ENCODE measurements at regions of chr4 and their contacts with region 1.

Region 1: DNA sequence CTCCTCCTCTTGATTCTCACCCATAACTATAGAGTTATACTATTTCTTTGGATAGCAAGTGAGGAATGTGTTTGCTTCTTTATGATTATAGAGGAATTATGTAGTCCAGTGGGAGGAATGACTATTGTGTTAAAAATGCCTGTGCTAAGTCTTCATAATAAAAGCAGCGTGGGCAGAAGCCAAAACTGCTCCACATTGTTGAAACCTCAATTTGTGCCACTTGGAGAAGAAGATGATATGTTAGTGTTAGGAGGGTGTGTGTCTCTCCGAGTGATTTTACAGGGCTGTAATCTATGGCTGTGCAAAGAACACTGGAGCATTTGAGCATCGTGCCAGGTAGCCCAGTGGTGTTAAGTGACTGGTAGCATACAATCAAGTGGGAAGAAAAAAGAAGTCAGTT is 74.3 kb downstream of the FRAS1 start:
- DNase-seq: no peak
- ATAC-seq: no peak
- H3K4me3 ChIP-seq: no peak overlapping the region
- H3K27ac ChIP-seq: peak overlapping the region; percentile 11
- H3K4me1 ChIP-seq: peaks cover 75% of the 10 kb centered on the region
- H3K27me3 ChIP-seq: no peaks in the 10 kb centered on the region
- CTCF ChIP-seq: no peak
- EP300 ChIP-seq: no peak
- POLR2A ChIP-seq: no peak
- RAD21 ChIP-seq: no peak

Region 2: GRCh38 chr4:78149751-78150542 is 18.5 kb after region 1 on chr4:
- CTCF ChIA-PET with region 1: no interaction called
- POLR2A ChIA-PET with region 1: interaction called, 8 read pairs
- in situ Hi-C with region 1: no loop called
- intact Hi-C with region 1: loop called (anchors 2 kb)
- DNase-seq: no peak
- ATAC-seq: peak; percentile 69
- H3K4me3 ChIP-seq: peak overlapping the region; percentile 25 to 39 (median 36); a peak in 5 of 6 replicates
- H3K27ac ChIP-seq: peak overlapping the region; percentile 79
- H3K4me1 ChIP-seq: peaks cover 84% of the 10 kb centered on the region
- H3K27me3 ChIP-seq: no peaks in the 10 kb centered on the region
- CTCF ChIP-seq: no peak
- EP300 ChIP-seq: no peak
- POLR2A ChIP-seq: no peak
- RAD21 ChIP-seq: no peak

Region 3: GRCh38 chr4:78166637-78167036 is 35.2 kb after region 1 on chr4:
- CTCF ChIA-PET with region 1: no interaction called
- POLR2A ChIA-PET with region 1: interaction called, 7 read pairs
- in situ Hi-C with region 1: no loop called
- intact Hi-C with region 1: loop called (anchors 5 kb)
- DNase-seq: no peak
- ATAC-seq: no peak
- H3K4me3 ChIP-seq: no peak overlapping the region
- H3K27ac ChIP-seq: peak overlapping the region; percentile 82
- H3K4me1 ChIP-seq: peaks cover 69% of the 10 kb centered on the region
- H3K27me3 ChIP-seq: no peaks in the 10 kb centered on the region
- CTCF ChIP-seq: no peak
- EP300 ChIP-seq: no peak
- POLR2A ChIP-seq: no peak
- RAD21 ChIP-seq: no peak

Region 4: GRCh38 chr4:78218260-78218659 is 86.9 kb after region 1 on chr4:
- CTCF ChIA-PET with region 1: no interaction called
- POLR2A ChIA-PET with region 1: no interaction called
- in situ Hi-C with region 1: no loop called
- intact Hi-C with region 1: loop called (anchors 5 kb)
- DNase-seq: peak; percentile 55
- ATAC-seq: peak; percentile 74
- H3K4me3 ChIP-seq: no peak overlapping the region
- H3K27ac ChIP-seq: peak overlapping the region; percentile 40
- H3K4me1 ChIP-seq: peaks cover 51% of the 10 kb centered on the region
- H3K27me3 ChIP-seq: no peaks in the 10 kb centered on the region
- CTCF ChIP-seq: no peak
- EP300 ChIP-seq: no peak
- POLR2A ChIP-seq: no peak
- RAD21 ChIP-seq: no peak